Activated CD4-positive, alpha-beta T cell treated with anti-CD3 and anti-CD28 coated beads for 36 hours (primary cell): ENCODE measurements at regions of chr2 and their contacts with region 1.

Region 1: DNA sequence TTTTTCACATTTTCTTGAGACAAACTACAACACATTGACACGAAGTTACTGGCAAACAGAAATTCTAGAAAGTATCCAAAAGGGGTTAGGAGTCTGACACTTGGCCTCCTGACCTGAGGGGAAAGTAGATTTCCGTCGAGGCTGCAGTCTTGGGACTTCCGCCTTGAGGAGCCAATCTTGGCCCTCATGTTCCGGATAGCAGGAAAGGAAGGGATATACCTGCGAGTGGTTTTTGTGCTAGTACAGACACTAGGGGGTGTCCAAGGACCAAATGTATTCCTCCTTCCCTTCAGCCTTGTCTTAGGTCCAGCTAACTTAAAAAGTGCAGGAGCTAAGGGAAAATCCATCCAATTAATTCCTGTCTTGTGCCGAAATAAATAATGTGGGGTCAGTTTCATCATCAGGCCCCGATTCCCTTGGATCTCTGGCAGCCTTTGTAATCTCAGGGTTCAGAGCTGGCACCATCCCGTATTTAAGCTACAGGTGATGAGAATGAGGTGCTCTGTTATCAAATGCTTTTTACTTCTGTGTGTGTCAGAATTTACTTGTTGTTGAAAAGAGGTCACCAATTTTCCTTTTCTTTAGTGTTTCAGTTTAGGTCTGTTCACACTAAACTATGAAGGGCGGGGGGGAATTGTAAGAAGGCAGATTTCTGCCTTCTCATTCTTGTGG is 330.2 kb upstream of the FANCL start:
- DNase-seq: peak; percentile 22
- ATAC-seq: peak; percentile 66
- H3K4me3 Mint-ChIP-seq: no peak overlapping the region
- H3K27ac Mint-ChIP-seq: no peak overlapping the region
- H3K4me1 Mint-ChIP-seq: peaks cover 2% of the 10 kb centered on the region
- H3K27me3 Mint-ChIP-seq: no peaks in the 10 kb centered on the region

Region 2: GRCh38 chr2:58527647-58528046 is 43.7 kb before region 1 on chr2:
- CTCF ChIA-PET with region 1: no interaction called
- POLR2A ChIA-PET with region 1: no interaction called
- intact Hi-C with region 1: no loop called
- DNase-seq: no peak
- ATAC-seq: no peak
- H3K4me3 Mint-ChIP-seq: no peak overlapping the region
- H3K27ac Mint-ChIP-seq: no peak overlapping the region
- H3K4me1 Mint-ChIP-seq: no peaks in the 10 kb centered on the region
- H3K27me3 Mint-ChIP-seq: peaks cover 3% of the 10 kb centered on the region

Region 3: DNA sequence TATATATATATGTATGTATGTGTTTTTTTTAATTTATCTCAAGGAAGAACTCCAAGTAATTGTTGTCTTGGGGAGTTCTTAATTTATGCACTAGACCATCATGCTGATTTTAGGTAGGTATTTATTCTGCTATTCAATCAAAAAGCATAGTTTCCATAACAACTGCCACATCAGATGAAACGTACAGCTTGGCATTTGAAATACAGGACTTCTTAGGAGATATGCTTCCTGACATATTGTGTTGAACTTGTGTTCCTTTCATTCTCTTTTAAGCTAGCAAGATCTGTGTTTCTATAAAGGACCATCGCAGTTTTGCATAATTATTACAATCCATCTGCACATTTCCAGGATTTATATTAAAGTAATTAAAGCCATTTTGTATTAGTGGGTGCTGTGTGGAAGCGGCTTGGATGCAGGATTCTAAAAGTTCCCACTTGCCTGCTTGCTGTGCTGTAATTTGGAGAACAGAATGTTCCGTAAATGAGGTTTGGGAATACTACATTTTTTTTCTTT is 13.3 kb after region 1 on chr2:
- CTCF ChIA-PET with region 1: no interaction called
- POLR2A ChIA-PET with region 1: no interaction called
- intact Hi-C with region 1: no loop called
- DNase-seq: no peak
- ATAC-seq: no peak
- H3K4me3 Mint-ChIP-seq: no peak overlapping the region
- H3K27ac Mint-ChIP-seq: no peak overlapping the region
- H3K4me1 Mint-ChIP-seq: no peaks in the 10 kb centered on the region
- H3K27me3 Mint-ChIP-seq: no peaks in the 10 kb centered on the region

Region 4: DNA sequence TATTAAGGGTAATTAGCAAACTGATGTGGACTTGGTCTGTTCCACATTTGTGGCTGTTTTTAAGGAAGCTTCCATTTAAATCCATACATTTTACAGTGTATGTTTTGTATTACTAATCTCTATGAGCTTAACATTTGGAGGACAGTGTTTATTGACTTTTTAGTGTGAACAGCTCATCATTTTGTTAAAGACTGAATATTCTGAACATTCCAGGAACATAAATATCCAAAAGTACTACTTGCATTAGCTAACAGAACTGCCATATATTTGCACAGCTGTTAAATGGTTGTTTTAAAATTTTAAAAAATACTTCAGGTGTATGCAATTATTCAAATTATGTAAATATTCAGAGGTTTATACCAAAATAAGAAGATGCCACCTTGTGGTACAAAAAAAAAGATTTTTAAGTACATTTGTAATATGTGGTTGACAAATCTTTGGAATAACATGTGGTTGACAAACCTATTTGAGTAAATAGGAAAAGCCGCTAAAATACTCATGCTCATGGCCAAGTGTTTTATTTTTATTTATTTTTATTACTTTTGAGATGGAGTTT is 109.5 kb after region 1 on chr2:
- CTCF ChIA-PET with region 1: interaction called, 3 read pairs
- POLR2A ChIA-PET with region 1: no interaction called
- intact Hi-C with region 1: loop called in 1 of 2 experiments (anchors 1 kb)
- DNase-seq: no peak
- ATAC-seq: no peak
- H3K4me3 Mint-ChIP-seq: no peak overlapping the region
- H3K27ac Mint-ChIP-seq: no peak overlapping the region
- H3K4me1 Mint-ChIP-seq: no peaks in the 10 kb centered on the region
- H3K27me3 Mint-ChIP-seq: no peaks in the 10 kb centered on the region

Region 5: DNA sequence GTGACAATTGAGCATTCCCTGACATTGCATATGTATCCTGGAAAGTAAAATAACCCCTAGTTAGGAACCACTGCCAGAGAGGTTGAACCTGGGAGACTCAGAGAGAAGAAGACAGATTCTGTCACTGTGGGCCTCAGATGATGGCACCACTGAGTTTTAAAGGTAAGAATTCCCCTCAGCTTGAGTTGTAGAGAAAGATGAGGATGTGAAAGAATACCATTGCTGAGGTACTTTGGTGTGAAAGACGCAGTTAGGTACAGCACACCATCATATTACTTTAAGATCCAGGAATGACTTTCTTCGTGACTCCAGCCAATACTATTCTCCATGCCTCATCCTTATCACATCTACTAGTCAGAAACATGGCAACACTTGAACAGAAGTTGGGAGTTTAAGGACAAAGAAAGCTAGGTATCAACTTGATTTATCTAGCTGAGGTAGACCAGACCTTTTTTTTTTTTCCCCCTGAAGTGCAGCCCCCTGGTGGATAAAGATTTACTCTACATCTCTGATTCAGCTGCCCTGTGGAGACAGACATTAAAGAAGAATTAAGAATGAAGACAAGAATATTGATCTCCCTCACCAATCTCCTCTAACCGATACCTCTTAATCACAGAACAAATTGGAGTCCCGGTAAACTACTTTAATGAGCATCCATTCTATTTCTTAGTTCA is 300.3 kb after region 1 on chr2:
- CTCF ChIA-PET with region 1: no interaction called
- POLR2A ChIA-PET with region 1: no interaction called
- intact Hi-C with region 1: loop called in 1 of 2 experiments (anchors 5 kb)
- DNase-seq: no peak
- ATAC-seq: no peak
- H3K4me3 Mint-ChIP-seq: no peak overlapping the region
- H3K27ac Mint-ChIP-seq: no peak overlapping the region
- H3K4me1 Mint-ChIP-seq: peaks cover 4% of the 10 kb centered on the region
- H3K27me3 Mint-ChIP-seq: no peaks in the 10 kb centered on the region